CD4-positive, alpha-beta memory T cell (primary cell): ENCODE measurements at regions of chr16 and their contacts with region 1.

Region 1: GRCh38 chr16:4734063-4734729 is at the starts of genes ANKS3 and DNAAF8:
- DNase-seq: peak; percentile 76 to 84 (median 78)
- H3K4me3 ChIP-seq: peak within 1 kb of the TSS; percentile 88 to 99
- H3K4me3 Mint-ChIP-seq: peak within 1 kb of the TSS; percentile 91 to 94 (median 92)
- H3K27ac ChIP-seq: peak within 1 kb of the TSS; percentile 76
- H3K27ac Mint-ChIP-seq: peak within 1 kb of the TSS; percentile 90 to 96 (median 93)
- H3K4me1 ChIP-seq: peaks cover 15% of the 10 kb centered on the region
- H3K4me1 Mint-ChIP-seq: peaks cover 11 to 30% (median 21%) of the 10 kb centered on the region in 4 donors
- H3K27me3 ChIP-seq: no peaks in the 10 kb centered on the region
- H3K27me3 Mint-ChIP-seq: no peaks in the 10 kb centered on the region
- total RNA-seq, gene ANKS3: 28.5 to 33.9 TPM
- total RNA-seq, gene DNAAF8: 0.12 to 0.64 TPM

Region 2: GRCh38 chr16:4660454-4661007 is 73.7 kb before region 1 on chr16:
- CTCF ChIA-PET with region 1: no interaction called
- POLR2A ChIA-PET with region 1: interaction called, 12 read pairs
- intact Hi-C with region 1: loop called (anchors 2 kb)
- DNase-seq: peak; percentile 42 to 79 (median 63)
- H3K4me3 ChIP-seq: no peak overlapping the region
- H3K4me3 Mint-ChIP-seq: peak overlapping the region in 5 of 8 donors; percentile 36 to 69 (median 43)
- H3K27ac ChIP-seq: peak overlapping the region; percentile 49
- H3K27ac Mint-ChIP-seq: peak overlapping the region; percentile 81 to 94 (median 90)
- H3K4me1 ChIP-seq: peaks cover 48% of the 10 kb centered on the region
- H3K4me1 Mint-ChIP-seq: peaks cover 16 to 63% (median 35%) of the 10 kb centered on the region in 4 donors
- H3K27me3 ChIP-seq: no peaks in the 10 kb centered on the region
- H3K27me3 Mint-ChIP-seq: no peaks in the 10 kb centered on the region

Region 3: GRCh38 chr16:4700380-4700996 is 33.7 kb before region 1 on chr16:
- CTCF ChIA-PET with region 1: no interaction called
- POLR2A ChIA-PET with region 1: interaction called, 40 read pairs
- intact Hi-C with region 1: no loop called
- DNase-seq: peak in 2 of 5 donors; percentile 34 to 71
- H3K4me3 ChIP-seq: no peak overlapping the region
- H3K4me3 Mint-ChIP-seq: no peak overlapping the region
- H3K27ac ChIP-seq: no peak overlapping the region
- H3K27ac Mint-ChIP-seq: peak overlapping the region in 2 of 7 donors; percentile 27 to 46
- H3K4me1 ChIP-seq: peaks cover 10% of the 10 kb centered on the region
- H3K4me1 Mint-ChIP-seq: peaks cover 0 to 19% (median 1%) of the 10 kb centered on the region in 4 donors
- H3K27me3 ChIP-seq: no peaks in the 10 kb centered on the region
- H3K27me3 Mint-ChIP-seq: no peaks in the 10 kb centered on the region

Region 4: GRCh38 chr16:4802659-4803287 is 68.6 kb after region 1 on chr16:
- CTCF ChIA-PET with region 1: interaction called, 6 read pairs
- POLR2A ChIA-PET with region 1: interaction called, 23 read pairs
- intact Hi-C with region 1: loop called (anchors 2 kb)
- DNase-seq: peak; percentile 88 to 97 (median 92)
- H3K4me3 ChIP-seq: peak overlapping the region; percentile 52 to 58
- H3K4me3 Mint-ChIP-seq: peak overlapping the region; percentile 82 to 90 (median 85)
- H3K27ac ChIP-seq: peak overlapping the region; percentile 72
- H3K27ac Mint-ChIP-seq: peak overlapping the region; percentile 66 to 97 (median 82)
- H3K4me1 ChIP-seq: peaks cover 18% of the 10 kb centered on the region
- H3K4me1 Mint-ChIP-seq: peaks cover 1 to 25% (median 11%) of the 10 kb centered on the region in 4 donors
- H3K27me3 ChIP-seq: no peaks in the 10 kb centered on the region
- H3K27me3 Mint-ChIP-seq: no peaks in the 10 kb centered on the region

Region 5: DNA sequence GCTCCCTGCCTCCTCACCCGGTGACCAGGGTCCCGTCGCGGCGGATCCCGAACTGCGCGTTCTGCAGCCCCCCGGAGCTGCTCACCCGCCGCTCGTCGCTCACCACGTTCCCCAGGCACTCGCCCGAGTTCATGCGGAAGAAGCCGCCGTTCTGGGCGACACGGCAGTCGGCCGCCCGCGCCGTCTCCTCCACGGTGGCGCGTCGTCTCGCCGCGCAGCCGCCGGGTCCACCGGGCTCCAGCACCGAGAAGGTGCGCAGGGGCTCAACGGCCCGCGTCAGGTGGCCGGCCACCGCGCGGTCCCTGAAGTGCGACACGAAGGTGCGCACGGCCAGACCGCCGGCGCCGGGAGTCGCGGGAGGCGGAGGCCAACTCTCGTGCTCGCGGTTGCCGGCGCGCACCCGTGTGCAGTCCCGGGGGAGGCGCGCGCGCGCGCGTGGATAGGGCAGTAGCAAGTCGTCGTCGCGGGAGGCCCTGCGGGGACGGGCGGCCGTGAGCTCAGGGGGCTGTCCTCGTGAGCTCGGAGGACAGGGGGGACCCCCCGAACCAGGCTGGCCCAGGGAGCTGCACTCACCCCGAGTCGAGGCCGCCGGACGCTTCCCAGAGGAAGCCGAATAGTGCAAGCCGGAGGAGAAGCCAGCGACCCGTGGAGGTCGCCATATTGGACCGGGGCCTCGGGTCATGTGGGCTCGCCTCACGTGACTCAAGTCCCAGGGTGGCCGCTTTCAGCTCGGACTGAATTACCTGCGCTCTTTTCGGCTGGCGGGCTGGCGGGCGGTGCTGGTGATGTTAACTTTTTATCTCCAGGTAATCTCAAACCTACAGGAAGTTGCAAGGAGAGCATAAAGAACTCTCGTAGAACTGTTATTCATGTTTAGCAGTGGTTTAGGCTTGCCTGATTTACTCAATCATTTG is 299.3 kb after region 1 on chr16 and contains the start of gene NAGPA:
- CTCF ChIA-PET with region 1: no interaction called
- POLR2A ChIA-PET with region 1: interaction called, 10 read pairs
- intact Hi-C with region 1: loop called (anchors 1 kb)
- DNase-seq: peak; percentile 86 to 88 (median 87)
- H3K4me3 ChIP-seq: peak within 1 kb of the TSS; percentile 26 to 86
- H3K4me3 Mint-ChIP-seq: peak within 1 kb of the TSS; percentile 85 to 93 (median 90)
- H3K27ac ChIP-seq: peak within 1 kb of the TSS; percentile 50
- H3K27ac Mint-ChIP-seq: peak within 1 kb of the TSS; percentile 88 to 96 (median 91)
- H3K4me1 ChIP-seq: peaks cover 16% of the 10 kb centered on the region
- H3K4me1 Mint-ChIP-seq: peaks cover 12 to 32% (median 15%) of the 10 kb centered on the region in 4 donors
- H3K27me3 ChIP-seq: no peaks in the 10 kb centered on the region
- H3K27me3 Mint-ChIP-seq: no peaks in the 10 kb centered on the region
- total RNA-seq, gene NAGPA: 30.7 to 33.2 TPM

Region 6: DNA sequence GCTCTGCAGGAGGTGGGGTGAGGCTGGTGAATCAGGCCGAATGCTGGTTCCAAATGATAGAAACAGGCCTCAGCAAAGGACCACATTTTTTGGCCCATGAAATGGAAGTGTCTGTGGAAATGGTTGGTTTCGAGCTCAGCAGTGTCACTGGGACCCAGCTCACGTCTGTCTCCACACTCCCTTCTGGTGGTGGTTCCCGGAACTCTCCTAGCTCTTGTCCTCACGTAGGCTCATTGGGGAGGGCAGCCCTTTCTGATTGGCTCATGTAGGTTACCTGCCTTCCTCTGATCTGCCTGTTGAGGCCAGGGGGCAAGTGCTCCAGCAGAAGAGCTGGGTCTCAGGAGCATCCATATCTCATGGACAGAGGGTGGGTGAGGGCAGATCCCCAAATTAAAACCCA is 341.4 kb after region 1 on chr16:
- CTCF ChIA-PET with region 1: no interaction called
- POLR2A ChIA-PET with region 1: no interaction called
- intact Hi-C with region 1: no loop called
- DNase-seq: no peak
- H3K4me3 ChIP-seq: no peak overlapping the region
- H3K4me3 Mint-ChIP-seq: peak overlapping the region in 1 of 8 donors; percentile 33
- H3K27ac ChIP-seq: no peak overlapping the region
- H3K27ac Mint-ChIP-seq: no peak overlapping the region
- H3K4me1 ChIP-seq: peaks cover 22% of the 10 kb centered on the region
- H3K4me1 Mint-ChIP-seq: peaks cover 21 to 35% (median 28%) of the 10 kb centered on the region in 4 donors
- H3K27me3 ChIP-seq: no peaks in the 10 kb centered on the region
- H3K27me3 Mint-ChIP-seq: no peaks in the 10 kb centered on the region